Endothelial cell of umbilical vein (primary cell): ENCODE measurements at regions of chr17 and their contacts with region 1.

Region 1: GRCh38 chr17:78840725-78841611 is at the start of gene USP36:
- DNase-seq: peak; percentile 99
- H3K4me3 ChIP-seq: peak within 1 kb of the TSS; percentile 64 to 72 (median 68)
- H3K27ac ChIP-seq: peak within 1 kb of the TSS; percentile 81
- H3K4me1 ChIP-seq: peaks cover 16% of the 10 kb centered on the region
- H3K27me3 ChIP-seq: no peaks in the 10 kb centered on the region
- CTCF ChIP-seq: no peak
- POLR2A ChIP-seq: peak; percentile 56
- total RNA-seq, gene USP36: 46.6 and 49.8 TPM in 2 replicates

Region 2: DNA sequence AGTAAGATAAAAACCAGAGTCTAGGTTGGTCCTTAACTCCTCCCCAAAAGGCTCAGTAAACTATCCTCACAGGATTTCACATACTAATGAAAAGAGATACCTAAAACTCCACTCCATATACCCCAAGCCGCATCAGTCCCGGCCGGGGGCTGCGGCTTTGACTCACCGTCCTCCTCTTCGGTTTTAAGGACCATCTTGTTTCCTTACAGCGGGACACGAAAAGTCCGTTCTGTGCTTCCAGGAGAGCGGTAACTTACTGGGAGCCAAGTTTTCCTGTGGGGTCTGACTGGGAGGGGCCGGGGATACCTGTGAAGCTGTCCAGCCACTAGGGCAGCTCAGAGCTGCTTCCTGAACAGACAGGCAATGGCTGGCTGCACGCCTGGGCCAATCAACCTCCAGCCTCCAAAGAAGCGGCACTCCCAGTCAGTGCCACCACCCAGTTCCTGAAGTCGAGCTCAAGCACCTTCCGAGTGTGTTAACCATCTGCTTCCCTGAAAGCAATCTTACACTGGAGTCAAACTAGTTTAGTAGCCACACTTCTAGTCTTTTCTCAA is 104.4 kb before region 1 on chr17:
- CTCF ChIA-PET with region 1: no interaction called
- POLR2A ChIA-PET with region 1: no interaction called
- dilution Hi-C with region 1: no loop called
- intact Hi-C with region 1: no loop called
- DNase-seq: peak; percentile 79
- H3K4me3 ChIP-seq: peak overlapping the region; percentile 47 to 77 (median 54)
- H3K27ac ChIP-seq: peak overlapping the region; percentile 83
- H3K4me1 ChIP-seq: peaks cover 29% of the 10 kb centered on the region
- H3K27me3 ChIP-seq: no peaks in the 10 kb centered on the region
- CTCF ChIP-seq: peak in 1 of 2 donors; percentile 23
- POLR2A ChIP-seq: no peak

Region 3: DNA sequence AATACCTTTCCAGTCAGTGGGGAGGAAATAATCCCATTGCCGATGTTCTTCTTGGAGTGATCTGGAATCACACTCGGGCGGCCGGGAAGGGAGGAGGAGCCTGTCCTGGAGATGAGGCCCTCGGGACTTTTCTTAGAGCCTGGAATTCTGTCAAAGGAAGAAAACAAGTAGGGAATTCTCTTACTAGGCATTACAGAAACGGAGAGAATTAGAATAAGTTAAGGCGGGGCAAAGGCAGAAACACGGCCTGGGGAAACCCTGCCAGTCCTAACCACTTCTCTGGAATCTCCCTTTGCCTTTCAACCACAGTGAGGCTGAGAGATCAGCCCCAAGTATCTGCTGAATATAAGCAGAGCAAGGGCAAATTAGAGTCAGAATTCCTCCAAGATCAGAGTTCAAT is 28.1 kb before region 1 on chr17:
- CTCF ChIA-PET with region 1: no interaction called
- POLR2A ChIA-PET with region 1: no interaction called
- dilution Hi-C with region 1: no loop called
- intact Hi-C with region 1: no loop called
- DNase-seq: no peak
- H3K4me3 ChIP-seq: no peak overlapping the region
- H3K27ac ChIP-seq: no peak overlapping the region
- H3K4me1 ChIP-seq: no peaks in the 10 kb centered on the region
- H3K27me3 ChIP-seq: no peaks in the 10 kb centered on the region
- CTCF ChIP-seq: no peak
- POLR2A ChIP-seq: no peak

Region 4: GRCh38 chr17:78933959-78934568 is 93.1 kb after region 1 on chr17:
- CTCF ChIA-PET with region 1: no interaction called
- POLR2A ChIA-PET with region 1: no interaction called
- dilution Hi-C with region 1: no loop called
- intact Hi-C with region 1: loop called (anchors 1 kb)
- DNase-seq: peak; percentile 96
- H3K4me3 ChIP-seq: peak overlapping the region in 2 of 3 experiments; percentile 16 to 25
- H3K27ac ChIP-seq: peak overlapping the region; percentile 93
- H3K4me1 ChIP-seq: peaks cover 30% of the 10 kb centered on the region
- H3K27me3 ChIP-seq: no peaks in the 10 kb centered on the region
- CTCF ChIP-seq: no peak
- POLR2A ChIP-seq: peak; percentile 55